ENCODE measurements at regions of chr5 and their contacts with region 1.

Region 1: GRCh38 chr5:147628058-147628895 is 118.4 kb upstream of the DPYSL3 start:
- DNase-seq: no peak
- H3K4me3 ChIP-seq: no peak overlapping the region
- CTCF ChIP-seq: peak; percentile 66

Region 2: GRCh38 chr5:147617191-147617606 is 11.1 kb before region 1 on chr5:
- CTCF ChIA-PET with region 1: interaction called, 11 read pairs
- POLR2A ChIA-PET with region 1: no interaction called
- DNase-seq: no peak
- H3K4me3 ChIP-seq: no peak overlapping the region
- CTCF ChIP-seq: no peak

Region 3: DNA sequence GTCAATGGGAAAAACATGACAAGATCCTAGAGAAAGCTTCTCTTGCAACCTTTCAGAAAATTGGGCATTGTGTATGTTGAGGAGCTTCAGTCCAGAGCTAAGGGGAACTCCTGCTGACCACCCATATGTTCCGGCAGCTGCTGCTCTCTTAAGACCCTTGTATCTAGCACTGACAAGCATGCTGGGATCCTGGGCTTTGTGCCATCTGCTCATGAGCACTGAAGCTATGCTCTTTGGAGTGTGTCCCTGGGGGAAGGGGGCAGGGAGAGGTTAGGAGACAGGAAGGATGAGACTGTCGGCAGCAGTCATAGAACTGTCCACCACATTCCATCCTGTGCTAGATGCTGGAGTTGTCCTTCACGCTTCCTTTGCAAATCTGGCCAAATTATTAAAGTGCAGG is 45.0 kb after region 1 on chr5:
- CTCF ChIA-PET with region 1: no interaction called
- POLR2A ChIA-PET with region 1: no interaction called
- DNase-seq: no peak
- H3K4me3 ChIP-seq: no peak overlapping the region
- CTCF ChIP-seq: no peak

Region 4: GRCh38 chr5:147822686-147823491 is 194.6 kb after region 1 on chr5:
- CTCF ChIA-PET with region 1: interaction called, 106 read pairs
- POLR2A ChIA-PET with region 1: no interaction called
- DNase-seq: peak; percentile 17
- H3K4me3 ChIP-seq: no peak overlapping the region
- CTCF ChIP-seq: peak; percentile 65

Region 5: DNA sequence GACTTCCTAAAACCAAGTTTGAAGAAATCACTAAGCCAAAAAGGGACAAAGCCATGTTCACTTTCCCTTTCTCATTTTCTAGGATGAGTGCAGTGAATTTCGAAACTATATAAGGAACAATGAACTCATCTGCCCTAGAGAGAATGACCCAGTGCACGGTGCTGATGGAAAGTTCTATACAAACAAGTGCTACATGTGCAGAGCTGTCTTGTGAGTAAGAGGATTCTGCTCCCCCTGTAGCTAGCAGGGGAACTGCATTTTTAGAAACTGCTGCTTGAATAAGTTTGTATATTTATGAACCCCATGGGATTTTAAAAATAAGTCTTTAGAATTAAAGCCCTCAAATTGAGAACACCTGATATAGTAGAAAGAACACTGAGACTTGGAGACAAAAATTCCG is 497.4 kb after region 1 on chr5:
- CTCF ChIA-PET with region 1: no interaction called
- POLR2A ChIA-PET with region 1: no interaction called
- DNase-seq: no peak
- H3K4me3 ChIP-seq: no peak overlapping the region
- CTCF ChIP-seq: no peak

Measured in AG04449 (cell line).